Activated CD4-positive, alpha-beta memory T cell treated with anti-CD3 and anti-CD28 coated beads for 36 hours (primary cell): ENCODE measurements at regions of chr3 and their contacts with region 1.

Region 1: GRCh38 chr3:177426878-177427495 is 229.7 kb upstream of the TBL1XR1 start:
- DNase-seq: peak; percentile 83
- H3K4me3 Mint-ChIP-seq: peak overlapping the region; percentile 55
- H3K27ac Mint-ChIP-seq: peak overlapping the region; percentile 91
- H3K4me1 Mint-ChIP-seq: peaks cover 42% of the 10 kb centered on the region
- H3K27me3 Mint-ChIP-seq: peaks cover 7% of the 10 kb centered on the region

Region 2: DNA sequence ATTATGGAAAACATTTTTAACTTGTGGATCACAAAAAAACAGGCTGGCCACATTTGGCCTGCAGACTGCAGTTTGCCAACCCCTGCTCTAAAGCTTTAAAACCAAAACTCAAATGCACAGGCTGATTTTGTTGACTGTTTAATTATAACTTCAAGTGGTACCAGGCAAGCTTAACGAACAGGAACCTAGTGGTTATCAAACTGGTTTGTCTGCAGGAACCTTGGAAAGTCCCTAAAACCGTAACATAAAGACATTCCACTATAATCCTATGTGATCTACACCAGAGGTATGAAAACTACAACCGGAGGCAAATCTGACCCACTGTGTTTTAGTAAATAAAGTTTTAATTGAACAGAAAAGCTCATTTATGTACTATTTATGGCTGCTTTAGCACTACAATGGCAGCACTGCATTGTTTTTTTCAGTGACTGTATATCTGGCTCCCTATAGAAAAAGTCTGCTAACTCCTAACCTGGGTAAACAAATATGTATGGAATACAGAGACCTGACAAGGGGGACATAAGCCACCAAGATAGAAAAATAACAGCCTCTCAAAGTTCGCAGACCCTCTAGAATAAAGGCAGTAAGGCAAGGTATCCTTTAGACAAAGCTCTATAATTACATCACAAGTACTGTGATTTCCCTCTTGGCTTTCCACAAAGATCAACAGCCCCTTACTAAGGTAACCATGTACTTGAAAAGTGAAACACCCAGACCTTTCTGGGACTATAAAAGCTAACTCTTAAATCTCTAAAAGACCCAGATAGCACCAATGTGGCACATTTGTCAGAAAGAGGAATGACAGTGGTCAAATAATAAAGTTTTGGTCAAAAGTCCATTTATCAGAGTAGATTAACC is 281.8 kb before region 1 on chr3:
- CTCF ChIA-PET with region 1: no interaction called
- POLR2A ChIA-PET with region 1: no interaction called
- intact Hi-C with region 1: loop called (anchors 2 kb)
- DNase-seq: no peak
- H3K4me3 Mint-ChIP-seq: peak overlapping the region; percentile 34
- H3K27ac Mint-ChIP-seq: peak overlapping the region; percentile 66
- H3K4me1 Mint-ChIP-seq: peaks cover 67% of the 10 kb centered on the region
- H3K27me3 Mint-ChIP-seq: no peaks in the 10 kb centered on the region

Region 3: GRCh38 chr3:177337541-177338331 is 89.3 kb before region 1 on chr3:
- CTCF ChIA-PET with region 1: no interaction called
- POLR2A ChIA-PET with region 1: no interaction called
- intact Hi-C with region 1: loop called (anchors 1 kb)
- DNase-seq: peak; percentile 91
- H3K4me3 Mint-ChIP-seq: no peak overlapping the region
- H3K27ac Mint-ChIP-seq: peak overlapping the region; percentile 77
- H3K4me1 Mint-ChIP-seq: peaks cover 29% of the 10 kb centered on the region
- H3K27me3 Mint-ChIP-seq: peaks cover 4% of the 10 kb centered on the region

Region 4: DNA sequence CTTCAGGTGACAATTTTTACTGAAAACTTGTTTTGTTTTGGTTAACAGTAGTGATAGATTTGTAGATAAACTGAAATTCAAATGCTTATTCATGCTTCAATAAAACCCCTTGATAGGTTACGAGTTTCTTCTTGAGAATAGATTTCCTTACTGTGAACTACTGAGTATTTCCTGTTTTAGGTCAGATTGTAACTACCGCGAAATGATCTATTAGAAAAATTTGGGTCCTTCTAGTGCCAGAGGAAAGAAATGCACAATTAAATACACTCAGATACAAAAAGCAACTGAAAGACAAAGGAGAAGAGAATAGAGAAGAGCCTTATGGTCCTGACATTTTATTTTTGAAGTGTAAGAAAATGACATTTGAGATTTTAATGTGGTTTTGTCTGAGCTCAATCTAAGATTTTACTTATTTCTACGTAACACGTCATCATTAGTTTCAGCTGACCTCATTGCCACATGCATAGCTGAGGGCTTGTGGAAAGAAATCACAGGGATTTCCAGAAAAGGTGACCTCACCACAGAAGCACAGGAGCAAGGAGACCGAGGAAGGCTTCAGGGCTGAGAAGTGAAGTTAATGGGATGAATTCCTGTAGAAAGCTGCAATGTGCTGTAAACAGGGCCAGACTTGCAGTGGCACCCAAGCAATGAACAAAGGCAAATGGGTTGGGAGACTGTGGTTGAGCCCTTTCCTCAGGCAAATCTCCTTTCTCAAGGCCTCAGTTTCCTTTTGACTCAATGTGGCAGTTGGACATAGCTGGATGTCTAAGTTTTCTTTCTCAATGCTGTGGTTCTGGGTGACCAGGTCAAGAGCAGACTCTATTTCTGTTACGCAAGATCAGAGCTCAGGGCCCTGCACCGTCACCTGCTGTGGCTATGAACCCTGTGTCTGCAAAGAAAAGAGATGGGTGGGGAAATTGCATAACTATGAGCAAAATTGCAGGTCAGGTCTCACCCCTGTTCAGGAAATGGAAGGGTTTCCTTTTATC is 22.3 kb after region 1 on chr3:
- CTCF ChIA-PET with region 1: interaction called, 4 read pairs
- POLR2A ChIA-PET with region 1: interaction called, 3 read pairs
- intact Hi-C with region 1: loop called (anchors 1 kb)
- DNase-seq: peak; percentile 24
- H3K4me3 Mint-ChIP-seq: no peak overlapping the region
- H3K27ac Mint-ChIP-seq: peak overlapping the region; percentile 54
- H3K4me1 Mint-ChIP-seq: peaks cover 25% of the 10 kb centered on the region
- H3K27me3 Mint-ChIP-seq: no peaks in the 10 kb centered on the region

Region 5: GRCh38 chr3:177679568-177680441 is 252.8 kb after region 1 on chr3:
- CTCF ChIA-PET with region 1: no interaction called
- POLR2A ChIA-PET with region 1: no interaction called
- intact Hi-C with region 1: loop called (anchors 1 kb)
- DNase-seq: peak; percentile 64
- H3K4me3 Mint-ChIP-seq: no peak overlapping the region
- H3K27ac Mint-ChIP-seq: peak overlapping the region; percentile 69
- H3K4me1 Mint-ChIP-seq: peaks cover 21% of the 10 kb centered on the region
- H3K27me3 Mint-ChIP-seq: no peaks in the 10 kb centered on the region